Activated naive CD4-positive, alpha-beta T cell treated with anti-CD3 and anti-CD28 coated beads for 36 hours (primary cell): ENCODE measurements at regions of chr17 and their contacts with region 1.

Region 1: DNA sequence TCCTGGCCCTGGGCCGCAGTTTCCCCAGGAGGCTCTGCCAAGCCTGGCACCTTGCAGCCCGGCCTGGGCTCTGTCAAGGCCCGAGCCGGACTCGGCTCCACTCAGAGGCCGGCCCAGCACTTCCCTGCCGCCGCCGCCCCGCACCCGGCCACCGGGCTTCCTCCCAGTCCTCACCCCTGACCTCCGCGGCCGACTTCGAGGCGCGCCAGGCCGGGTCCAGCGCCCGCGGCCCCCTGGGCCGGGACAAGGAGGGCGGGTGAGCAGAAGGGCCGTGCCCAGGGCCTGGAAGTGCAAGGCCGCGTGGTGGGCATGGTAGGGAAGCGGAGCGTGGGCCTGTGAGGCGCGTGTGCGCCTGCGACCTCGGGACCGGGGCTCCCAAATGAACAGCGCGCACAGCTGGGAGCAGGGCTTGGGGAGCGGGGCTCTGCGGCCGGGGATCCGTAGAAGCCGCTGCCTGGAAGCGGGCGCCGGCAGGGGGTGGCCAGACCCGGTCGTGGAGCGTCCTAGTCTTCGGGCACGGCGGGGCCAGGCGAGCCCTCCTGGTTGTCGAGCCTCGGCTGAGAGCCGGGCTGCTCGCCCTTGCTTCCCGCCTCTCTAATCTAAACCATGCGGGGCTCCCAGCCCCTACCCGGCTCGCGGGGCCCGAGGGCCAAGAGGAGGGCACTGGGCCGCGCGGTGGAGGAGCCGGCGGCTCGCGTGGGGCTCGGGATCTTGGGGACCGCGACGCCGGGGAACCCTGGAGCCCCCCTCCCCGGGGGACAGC is 503 bp upstream of the TBX4 start:
- DNase-seq: no peak
- H3K4me3 Mint-ChIP-seq: no peak overlapping the region
- H3K27ac Mint-ChIP-seq: no peak overlapping the region
- H3K4me1 Mint-ChIP-seq: peaks cover 23% of the 10 kb centered on the region
- H3K27me3 Mint-ChIP-seq: peaks cover 52% of the 10 kb centered on the region

Region 2: DNA sequence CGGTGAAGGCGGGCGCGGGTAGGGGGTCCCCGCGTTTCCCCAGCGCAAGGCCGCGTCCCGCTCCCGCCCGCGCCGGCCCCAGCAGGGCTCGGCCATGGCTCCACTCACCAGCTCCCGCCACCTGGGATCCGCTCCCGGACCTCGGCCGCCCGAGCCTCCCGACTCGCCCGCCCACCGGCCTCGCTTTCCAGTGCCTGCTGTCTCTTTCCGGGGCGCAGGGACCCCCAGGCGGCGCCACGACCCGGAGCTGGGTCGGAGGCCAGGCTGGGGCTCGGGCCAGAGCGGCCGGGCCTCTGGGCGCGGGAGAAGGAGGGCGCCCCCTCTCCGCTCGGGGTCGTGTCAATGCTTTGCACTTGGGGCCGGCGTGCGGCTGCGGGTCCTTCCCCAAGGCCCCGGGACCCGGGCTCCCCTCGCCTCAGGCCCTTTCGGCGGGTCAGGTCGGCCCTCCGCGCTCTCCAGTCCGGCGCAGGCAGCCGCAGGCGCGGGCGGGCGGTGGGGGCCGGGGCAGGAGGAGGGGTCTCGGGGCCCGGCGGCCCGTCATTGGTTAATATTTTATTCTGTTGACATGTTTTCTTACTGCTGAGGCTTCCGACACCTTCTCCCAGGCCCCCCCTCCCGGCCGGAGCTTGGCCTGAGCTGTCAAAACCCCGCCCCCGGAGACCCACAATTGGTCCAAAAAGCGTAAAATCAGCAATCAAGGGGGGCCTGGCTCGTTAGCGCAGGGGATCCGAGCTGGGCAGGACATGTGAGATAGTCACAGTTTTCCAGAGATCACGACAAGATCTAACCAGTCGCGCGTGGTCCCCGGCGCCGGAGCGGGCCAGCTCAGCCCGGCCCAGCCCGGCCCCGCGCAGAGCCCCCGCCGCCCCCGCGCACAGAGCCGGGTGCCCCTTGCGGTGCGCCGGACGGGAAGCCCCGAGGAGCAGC is 52.3 kb before region 1 on chr17 and contains the start of gene TBX2:
- CTCF ChIA-PET with region 1: interaction called, 3 read pairs
- intact Hi-C with region 1: loop called (anchors 2 kb)
- DNase-seq: no peak
- H3K4me3 Mint-ChIP-seq: peak within 1 kb of the TSS; percentile 38
- H3K27ac Mint-ChIP-seq: no peak within 1 kb of the TSS
- H3K4me1 Mint-ChIP-seq: peaks cover 41% of the 10 kb centered on the region
- H3K27me3 Mint-ChIP-seq: peaks cover 65% of the 10 kb centered on the region
- total RNA-seq, gene TBX2: not detected

Region 3: DNA sequence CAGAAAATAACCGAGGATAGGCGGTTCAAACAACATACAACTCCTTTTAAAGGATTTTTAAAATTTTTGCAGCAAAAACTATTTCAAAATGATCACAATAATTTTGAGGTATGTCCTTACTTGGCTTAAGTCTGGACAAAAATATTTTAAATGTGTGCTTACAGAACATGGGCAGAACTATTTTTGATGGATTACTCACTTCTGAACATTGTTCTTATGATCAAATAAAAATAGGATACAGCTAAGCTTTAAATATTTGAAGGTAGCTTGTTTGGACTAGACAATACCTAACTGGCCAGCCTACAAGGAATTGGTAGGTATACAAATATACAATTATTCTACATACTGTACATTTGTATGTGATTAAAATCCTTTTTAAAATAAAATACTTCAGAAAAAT is 490.4 kb after region 1 on chr17:
- CTCF ChIA-PET with region 1: no interaction called
- intact Hi-C with region 1: no loop called
- DNase-seq: no peak
- H3K4me3 Mint-ChIP-seq: no peak overlapping the region
- H3K27ac Mint-ChIP-seq: no peak overlapping the region
- H3K4me1 Mint-ChIP-seq: no peaks in the 10 kb centered on the region
- H3K27me3 Mint-ChIP-seq: no peaks in the 10 kb centered on the region